Activated CD4-positive, alpha-beta memory T cell treated with anti-CD3 and anti-CD28 coated beads for 36 hours (primary cell): ENCODE measurements at regions of chr5 and their contacts with region 1.

Region 1: DNA sequence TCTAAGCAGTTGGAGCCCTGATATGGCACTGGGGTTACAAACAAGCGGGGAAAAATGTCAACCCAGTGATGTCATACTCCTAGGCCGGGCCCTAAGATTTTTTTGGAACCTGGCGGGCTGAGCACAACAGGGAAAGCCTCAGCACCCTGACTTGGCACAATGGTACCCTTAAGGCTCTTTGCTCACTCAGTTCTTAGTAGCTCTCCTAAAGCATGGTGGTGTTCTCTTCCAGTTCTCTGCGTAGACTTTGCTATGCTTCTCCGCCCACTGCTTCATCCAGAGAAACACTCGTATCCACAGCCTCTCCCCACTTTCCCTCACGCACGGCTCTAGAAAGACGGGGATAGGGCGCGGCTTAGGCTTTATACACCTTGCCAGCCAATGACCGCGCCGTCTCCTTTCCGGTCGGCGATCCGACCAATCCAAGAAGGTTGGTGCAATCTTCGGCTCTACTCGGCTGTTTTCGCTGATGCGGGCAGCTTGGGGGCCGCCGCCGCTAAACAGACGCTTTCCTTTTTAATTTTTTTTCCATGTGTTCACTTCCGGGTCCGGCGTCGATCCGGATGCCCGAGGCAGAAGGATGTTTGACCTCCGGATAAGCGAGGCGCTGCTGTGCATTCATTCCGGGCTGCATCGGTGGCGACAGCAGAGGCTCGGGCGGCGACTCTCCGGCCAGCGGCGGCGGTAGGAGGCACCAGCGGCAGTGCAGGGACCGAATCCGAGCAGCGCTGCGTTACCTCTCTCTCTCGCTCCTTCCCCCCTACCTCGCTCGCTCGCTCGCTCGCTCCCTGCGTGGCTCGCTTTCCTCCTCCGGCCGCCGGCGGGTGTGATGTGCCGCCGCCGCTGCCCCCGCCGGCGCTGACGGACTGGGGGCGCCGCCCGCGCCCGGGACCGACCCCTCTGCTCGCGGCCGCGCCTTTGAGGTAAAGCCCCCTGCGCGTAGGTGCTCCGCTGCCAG is at the start of gene CSNK1G3:
- DNase-seq: peak; percentile 97
- H3K4me3 Mint-ChIP-seq: peak within 1 kb of the TSS; percentile 99
- H3K27ac Mint-ChIP-seq: peak within 1 kb of the TSS; percentile 98
- H3K4me1 Mint-ChIP-seq: peaks cover 44% of the 10 kb centered on the region
- H3K27me3 Mint-ChIP-seq: no peaks in the 10 kb centered on the region
- total RNA-seq, gene CSNK1G3: 37.4 to 37.8 TPM

Region 2: GRCh38 chr5:121962347-121962670 is 1549.6 kb before region 1 on chr5:
- CTCF ChIA-PET with region 1: no interaction called
- POLR2A ChIA-PET with region 1: no interaction called
- intact Hi-C with region 1: loop called (anchors 5 kb)
- DNase-seq: no peak
- H3K4me3 Mint-ChIP-seq: peak overlapping the region; percentile 99
- H3K27ac Mint-ChIP-seq: peak overlapping the region; percentile 98
- H3K4me1 Mint-ChIP-seq: peaks cover 44% of the 10 kb centered on the region
- H3K27me3 Mint-ChIP-seq: peaks cover 12% of the 10 kb centered on the region

Region 3: DNA sequence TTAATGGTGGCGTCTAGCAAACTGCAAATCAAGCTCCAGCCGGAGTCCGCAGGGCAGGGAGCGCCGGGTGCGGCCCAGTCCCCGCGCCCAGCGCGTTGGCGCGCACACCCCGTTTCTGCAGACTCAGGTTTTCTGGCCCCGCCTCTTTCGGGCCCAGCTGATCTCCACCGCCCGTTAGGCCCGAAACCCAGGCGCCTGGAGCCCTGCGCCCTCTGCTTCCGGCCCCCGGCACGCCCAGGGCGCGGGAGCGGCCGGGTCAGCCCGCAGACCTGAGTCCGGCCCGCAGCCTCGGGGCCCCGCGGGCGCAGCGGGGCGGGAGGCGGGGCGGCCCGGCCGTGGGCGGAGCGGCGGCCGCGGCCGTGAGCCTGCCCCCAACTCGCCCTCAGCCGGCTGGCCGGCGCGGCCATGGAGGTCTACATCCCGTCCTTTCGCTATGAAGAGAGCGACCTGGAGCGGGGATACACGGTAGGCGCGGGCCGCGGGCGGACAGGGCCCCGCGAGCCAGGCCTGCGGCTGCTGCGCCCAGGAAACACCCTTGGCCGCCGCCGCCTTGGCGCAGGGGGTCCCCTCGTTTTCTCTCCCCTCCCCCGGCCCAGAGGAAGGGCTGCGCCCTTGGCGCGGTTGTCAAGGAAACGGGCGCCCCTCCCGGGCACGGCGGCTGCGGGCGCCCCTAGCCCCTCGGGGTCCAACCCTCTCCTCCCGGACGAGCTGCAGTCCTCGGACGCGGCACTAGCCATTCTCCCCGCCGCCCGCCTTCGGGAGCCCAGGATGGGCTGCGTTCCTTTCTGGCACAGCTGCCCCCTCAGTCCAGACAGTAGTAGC is 666.5 kb before region 1 on chr5 and contains the start of gene SNX24:
- CTCF ChIA-PET with region 1: no interaction called
- POLR2A ChIA-PET with region 1: interaction called, 4 read pairs
- intact Hi-C with region 1: loop called (anchors 10 kb)
- DNase-seq: peak; percentile 83
- H3K4me3 Mint-ChIP-seq: peak within 1 kb of the TSS; percentile 81
- H3K27ac Mint-ChIP-seq: peak within 1 kb of the TSS; percentile 28
- H3K4me1 Mint-ChIP-seq: peaks cover 24% of the 10 kb centered on the region
- H3K27me3 Mint-ChIP-seq: no peaks in the 10 kb centered on the region
- total RNA-seq, gene SNX24: 6.4 to 7.5 TPM

Region 4: DNA sequence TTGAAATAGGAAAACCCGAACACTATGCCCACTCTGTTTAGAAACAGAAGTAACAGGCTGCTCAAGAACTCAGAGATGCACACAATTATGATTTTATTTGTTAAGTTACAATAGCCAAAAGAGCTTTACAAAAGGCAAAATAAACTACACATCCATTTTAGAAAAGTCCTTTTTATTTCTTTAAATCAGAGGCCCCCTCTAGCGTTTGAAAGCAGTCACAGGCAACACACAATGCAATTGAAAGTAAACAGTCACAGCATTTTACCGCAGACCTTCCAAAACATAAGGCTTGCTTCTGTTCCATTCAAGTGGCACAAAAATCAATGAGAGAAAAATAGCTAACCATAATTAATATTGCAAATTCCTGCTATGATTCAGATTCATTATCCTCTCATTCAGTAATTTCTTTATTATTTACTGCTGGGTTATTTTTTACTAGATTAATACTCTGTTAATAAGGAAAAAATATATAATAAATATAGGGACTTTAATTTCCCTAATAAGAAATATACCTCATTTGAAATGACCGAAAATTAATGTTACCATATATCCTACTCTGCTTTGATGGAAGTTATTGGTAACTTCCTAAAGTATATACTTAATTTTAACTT is 167.0 kb before region 1 on chr5:
- CTCF ChIA-PET with region 1: no interaction called
- POLR2A ChIA-PET with region 1: no interaction called
- intact Hi-C with region 1: no loop called
- DNase-seq: no peak
- H3K4me3 Mint-ChIP-seq: no peak overlapping the region
- H3K27ac Mint-ChIP-seq: no peak overlapping the region
- H3K4me1 Mint-ChIP-seq: no peaks in the 10 kb centered on the region
- H3K27me3 Mint-ChIP-seq: no peaks in the 10 kb centered on the region

Region 5: DNA sequence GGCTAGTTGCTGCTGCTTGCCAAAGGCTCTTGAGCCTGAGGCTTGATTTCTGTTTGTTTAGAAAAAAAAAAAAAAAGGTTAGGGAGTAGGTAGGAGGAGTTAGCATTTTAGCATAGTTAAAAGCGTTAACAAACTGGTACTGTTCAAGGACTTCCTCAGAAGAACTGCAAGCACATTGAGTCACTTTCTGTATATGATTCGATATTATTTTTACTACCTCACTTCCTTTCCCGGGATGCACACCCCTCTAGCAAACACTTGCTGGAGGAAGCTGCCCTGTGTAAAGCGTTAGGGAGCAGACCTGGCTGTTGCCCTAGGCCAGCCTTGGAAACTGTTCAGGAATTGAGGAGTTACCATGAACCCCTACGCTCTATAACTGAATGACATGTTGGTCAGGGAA is 73.0 kb before region 1 on chr5:
- CTCF ChIA-PET with region 1: no interaction called
- POLR2A ChIA-PET with region 1: interaction called, 8 read pairs
- intact Hi-C with region 1: loop called (anchors 1 kb)
- DNase-seq: peak; percentile 51
- H3K4me3 Mint-ChIP-seq: no peak overlapping the region
- H3K27ac Mint-ChIP-seq: peak overlapping the region; percentile 67
- H3K4me1 Mint-ChIP-seq: peaks cover 31% of the 10 kb centered on the region
- H3K27me3 Mint-ChIP-seq: no peaks in the 10 kb centered on the region

Region 6: GRCh38 chr5:123460296-123460729 is 51.6 kb before region 1 on chr5:
- CTCF ChIA-PET with region 1: no interaction called
- POLR2A ChIA-PET with region 1: interaction called, 3 read pairs
- intact Hi-C with region 1: loop called (anchors 1 kb)
- DNase-seq: peak; percentile 61
- H3K4me3 Mint-ChIP-seq: no peak overlapping the region
- H3K27ac Mint-ChIP-seq: peak overlapping the region; percentile 87
- H3K4me1 Mint-ChIP-seq: peaks cover 17% of the 10 kb centered on the region
- H3K27me3 Mint-ChIP-seq: no peaks in the 10 kb centered on the region

Region 7: DNA sequence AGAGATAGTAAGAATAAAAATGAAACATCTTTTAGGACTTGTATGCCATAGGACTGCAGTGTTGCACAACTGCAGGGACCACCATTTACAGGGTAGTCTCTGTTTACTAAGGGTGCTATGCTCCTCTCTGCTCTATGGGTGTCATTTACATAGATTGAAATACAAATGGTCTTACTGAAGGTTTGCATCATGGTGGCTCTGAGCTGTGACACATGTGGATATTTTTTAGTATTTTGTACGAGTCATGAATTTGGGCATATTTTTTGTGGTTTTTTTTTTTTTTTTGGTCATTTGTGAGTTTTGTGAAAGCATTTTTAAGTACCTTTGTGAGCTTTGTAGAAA is 47.5 kb after region 1 on chr5:
- CTCF ChIA-PET with region 1: no interaction called
- POLR2A ChIA-PET with region 1: interaction called, 4 read pairs
- intact Hi-C with region 1: loop called (anchors 2 kb)
- DNase-seq: no peak
- H3K4me3 Mint-ChIP-seq: no peak overlapping the region
- H3K27ac Mint-ChIP-seq: no peak overlapping the region
- H3K4me1 Mint-ChIP-seq: peaks cover 21% of the 10 kb centered on the region
- H3K27me3 Mint-ChIP-seq: no peaks in the 10 kb centered on the region

Region 8: DNA sequence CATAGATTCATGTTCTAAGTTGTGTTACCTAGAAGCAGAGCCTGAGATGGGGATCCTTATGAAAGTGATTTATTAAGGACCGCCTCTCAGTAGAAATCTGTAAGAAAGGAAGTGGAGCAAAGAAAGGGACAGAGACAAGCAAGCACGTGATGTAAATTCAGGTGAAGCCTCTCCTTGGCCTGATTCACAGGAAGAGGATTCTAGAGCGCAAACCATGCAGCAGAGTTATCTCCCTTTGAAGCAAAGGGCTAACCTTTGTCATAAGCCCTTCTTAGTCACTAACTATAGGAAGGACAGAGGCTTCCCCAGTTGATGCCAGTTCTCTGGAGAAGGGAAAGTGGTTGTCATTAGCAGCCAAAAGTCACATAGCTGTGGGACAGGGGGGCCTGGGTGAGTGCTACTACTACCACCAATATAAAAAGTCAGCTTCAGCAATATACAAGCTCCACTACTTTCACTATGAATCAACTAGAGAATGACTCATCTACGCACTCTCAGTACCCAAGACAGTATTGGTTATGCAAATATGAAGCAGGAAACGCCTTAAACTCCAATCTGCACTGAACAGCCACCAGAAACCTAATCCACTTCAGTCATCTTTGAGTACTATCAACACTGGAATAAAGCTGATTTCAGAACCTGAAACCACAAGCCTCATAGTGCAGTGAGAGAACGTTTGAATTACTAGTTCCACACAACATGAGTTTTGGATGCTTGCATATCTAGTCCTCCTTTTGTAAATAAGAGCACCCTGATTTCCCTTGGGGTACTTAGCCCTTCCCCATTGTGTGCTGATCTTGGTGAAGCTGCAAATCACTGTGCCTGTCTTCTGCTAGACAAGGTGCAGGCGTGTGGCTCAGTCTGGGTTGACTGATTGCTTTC is 1071.8 kb after region 1 on chr5:
- CTCF ChIA-PET with region 1: no interaction called
- POLR2A ChIA-PET with region 1: no interaction called
- intact Hi-C with region 1: loop called (anchors 10 kb)
- DNase-seq: peak; percentile 38
- H3K4me3 Mint-ChIP-seq: no peak overlapping the region
- H3K27ac Mint-ChIP-seq: no peak overlapping the region
- H3K4me1 Mint-ChIP-seq: peaks cover 13% of the 10 kb centered on the region
- H3K27me3 Mint-ChIP-seq: peaks cover 2% of the 10 kb centered on the region